HEK293 (cell line): ENCODE measurements at regions of chr2 and their contacts with region 1.

Region 1: GRCh38 chr2:177148477-177149154 is 64.0 kb upstream of the HNRNPA3 start:
- H3K4me3 ChIP-seq: peak overlapping the region; percentile 42
- H3K27ac ChIP-seq: no peak overlapping the region
- H3K4me1 ChIP-seq: no peaks in the 10 kb centered on the region
- CTCF ChIP-seq: peak; percentile 88

Region 2: GRCh38 chr2:176638167-176639015 is 510.2 kb before region 1 on chr2:
- CTCF ChIA-PET with region 1: interaction called, 15 read pairs
- POLR2A ChIA-PET with region 1: interaction called, 3 read pairs
- H3K4me3 ChIP-seq: peak overlapping the region; percentile 69
- H3K27ac ChIP-seq: peak overlapping the region; percentile 94
- H3K4me1 ChIP-seq: 0 out of 2 replicates have a peak, but pooled peaks cover 2% of the 10 kb centered on the region
- CTCF ChIP-seq: no peak

Region 3: GRCh38 chr2:176669398-176670174 is 479.0 kb before region 1 on chr2:
- CTCF ChIA-PET with region 1: interaction called, 11 read pairs
- POLR2A ChIA-PET with region 1: no interaction called
- H3K4me3 ChIP-seq: no peak overlapping the region
- H3K27ac ChIP-seq: no peak overlapping the region
- H3K4me1 ChIP-seq: no peaks in the 10 kb centered on the region
- CTCF ChIP-seq: no peak

Region 4: DNA sequence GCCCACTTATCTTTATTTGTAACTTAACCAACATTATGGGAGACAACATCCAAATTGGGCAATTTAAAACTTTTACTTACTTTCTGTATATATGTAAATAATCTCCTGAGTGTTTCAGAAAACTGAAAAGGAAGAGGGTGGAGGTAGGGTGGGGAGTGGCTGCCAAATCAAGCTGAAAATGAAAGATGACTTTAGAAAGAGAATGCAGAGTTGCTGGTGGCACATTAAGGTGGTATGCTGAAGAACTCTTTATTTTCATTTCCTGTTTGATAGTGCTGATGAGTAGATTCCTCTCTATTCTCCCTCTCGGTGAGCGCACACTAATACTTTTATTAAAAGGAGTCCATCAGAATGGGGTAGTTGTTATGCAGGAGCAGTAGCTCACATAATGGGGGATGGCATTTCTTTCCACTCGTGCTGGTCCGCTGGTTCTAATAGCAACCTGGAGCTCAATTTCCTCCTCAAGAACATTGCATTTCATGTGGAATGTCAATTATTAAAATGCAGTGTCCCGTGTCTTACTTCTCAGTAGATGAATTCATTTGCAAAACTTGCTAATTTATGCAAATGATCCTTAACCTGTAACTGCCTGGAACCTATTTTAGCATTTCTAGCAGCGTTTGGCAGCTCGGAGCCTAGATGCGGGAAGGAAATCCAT is 402.9 kb before region 1 on chr2:
- CTCF ChIA-PET with region 1: no interaction called
- POLR2A ChIA-PET with region 1: no interaction called
- H3K4me3 ChIP-seq: no peak overlapping the region
- H3K27ac ChIP-seq: no peak overlapping the region
- H3K4me1 ChIP-seq: peaks cover 3% of the 10 kb centered on the region; the same call in 1 of the 2 replicates
- CTCF ChIP-seq: 0 out of 2 replicates have a peak, but pooled peaks have one; percentile 9

Region 5: DNA sequence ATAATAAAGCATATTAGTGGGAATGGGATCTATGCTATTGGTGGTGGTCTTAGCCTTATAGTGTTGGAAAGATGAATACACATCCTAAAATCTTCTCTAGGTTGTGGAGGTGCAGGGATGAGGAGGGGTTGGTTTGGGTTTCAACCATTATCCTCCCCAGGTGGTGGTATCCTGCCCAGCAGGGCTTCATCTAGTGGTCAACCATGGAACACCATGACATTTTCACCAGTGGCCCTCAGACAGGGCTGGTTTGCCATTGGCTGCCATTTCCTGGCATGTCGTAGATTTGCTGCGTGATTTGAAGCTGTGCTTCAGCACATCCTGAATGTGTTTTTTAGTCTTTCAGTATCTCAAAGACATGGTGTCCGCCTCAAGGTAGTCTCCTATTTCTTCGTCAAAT is 327.3 kb before region 1 on chr2:
- CTCF ChIA-PET with region 1: interaction called, 11 read pairs
- POLR2A ChIA-PET with region 1: no interaction called
- H3K4me3 ChIP-seq: no peak overlapping the region
- H3K27ac ChIP-seq: no peak overlapping the region
- H3K4me1 ChIP-seq: no peaks in the 10 kb centered on the region
- CTCF ChIP-seq: no peak

Region 6: DNA sequence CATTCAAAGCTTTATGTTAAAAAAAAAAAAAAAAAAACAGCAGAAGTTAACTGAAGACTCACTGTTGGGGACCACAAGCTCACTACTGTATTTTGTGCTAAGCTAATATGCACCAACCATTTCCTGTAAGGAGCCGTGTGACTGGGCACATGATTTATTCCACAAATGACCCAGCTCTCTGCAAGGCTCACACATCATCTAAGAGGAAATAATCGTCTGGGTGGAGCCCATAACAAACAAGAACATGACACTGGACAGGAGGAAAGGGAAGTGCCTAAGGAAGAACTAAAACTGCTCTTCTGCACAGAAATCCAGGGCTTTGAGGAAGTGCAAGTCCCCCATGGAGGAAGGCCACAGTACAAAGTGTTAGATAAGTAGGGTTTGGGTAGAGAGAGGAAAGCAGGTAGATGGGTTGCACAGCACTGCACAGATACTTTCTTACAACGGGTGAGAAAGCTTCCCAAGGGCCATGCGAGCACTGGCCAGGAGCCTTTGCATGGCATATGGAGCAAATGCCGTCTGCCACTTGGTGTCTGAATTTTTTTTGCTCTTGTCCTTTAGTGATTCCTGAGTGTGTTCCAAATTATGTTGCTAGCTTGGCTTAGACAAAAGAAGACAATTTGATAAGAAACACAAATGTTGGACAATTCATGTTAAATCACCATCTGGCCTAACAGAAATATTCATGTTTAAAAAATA is 91.5 kb after region 1 on chr2:
- CTCF ChIA-PET with region 1: no interaction called
- POLR2A ChIA-PET with region 1: no interaction called
- H3K4me3 ChIP-seq: no peak overlapping the region
- H3K27ac ChIP-seq: no peak overlapping the region
- H3K4me1 ChIP-seq: peaks cover 30% of the 10 kb centered on the region
- CTCF ChIP-seq: no peak